H1 (cell line): ENCODE measurements at regions of chr9 and their contacts with region 1.

Region 1: DNA sequence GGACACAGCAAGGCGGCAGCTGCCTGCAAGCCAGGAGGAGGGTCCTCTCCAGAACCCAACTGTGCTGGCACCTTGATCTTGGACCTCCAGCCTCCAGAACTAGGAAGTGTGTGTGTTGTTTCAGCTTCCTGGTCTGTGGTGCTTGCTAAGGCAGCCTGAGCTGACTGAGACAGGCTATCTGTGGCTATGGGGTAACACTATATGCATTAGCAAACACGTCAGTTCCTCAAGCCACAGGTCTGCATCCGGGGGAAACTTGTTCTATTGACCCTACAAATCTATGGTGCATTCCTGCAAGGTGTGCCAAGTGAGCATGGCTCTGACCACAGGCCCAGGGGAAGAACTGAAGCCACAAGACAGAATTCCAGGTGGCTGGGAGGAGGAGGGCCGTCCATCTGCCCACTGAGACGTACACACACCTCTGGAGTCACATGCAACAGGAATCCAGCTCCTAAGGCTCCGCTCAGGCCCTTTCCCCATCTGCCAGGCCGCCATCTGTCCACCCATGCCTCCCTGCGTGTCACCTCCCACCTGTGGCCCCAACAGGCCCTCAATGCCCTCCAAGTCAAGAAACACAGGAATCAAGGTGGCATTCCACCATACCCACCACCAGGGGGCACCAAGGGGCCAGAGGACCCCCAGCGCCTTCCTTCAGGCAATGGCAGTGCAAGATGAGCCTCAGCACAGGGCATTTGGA is 174.9 kb downstream of the ROR2 start:
- DNase-seq: peak; percentile 36 to 87
- H3K4me3 ChIP-seq: no peak overlapping the region
- H3K27ac ChIP-seq: no peak overlapping the region
- H3K4me1 ChIP-seq: peaks cover 0 to 2% (median 0%) of the 10 kb centered on the region in 4 experiments; a peak in 1 of 7 replicates
- H3K27me3 ChIP-seq: no peaks in the 10 kb centered on the region
- CTCF ChIP-seq: peak; percentile 90 to 97 (median 96)
- EP300 ChIP-seq: no peak
- POLR2A ChIP-seq: no peak
- RAD21 ChIP-seq: peak; percentile 96 to 99

Region 2: GRCh38 chr9:91785447-91785842 is 10.3 kb after region 1 on chr9:
- CTCF ChIA-PET with region 1: interaction called, 10 read pairs
- POLR2A ChIA-PET with region 1: no interaction called
- DNase-seq: no peak
- H3K4me3 ChIP-seq: no peak overlapping the region
- H3K27ac ChIP-seq: no peak overlapping the region
- H3K4me1 ChIP-seq: no peaks in the 10 kb centered on the region; a peak in 2 of 7 replicates
- H3K27me3 ChIP-seq: no peaks in the 10 kb centered on the region
- CTCF ChIP-seq: no peak
- EP300 ChIP-seq: no peak
- POLR2A ChIP-seq: no peak
- RAD21 ChIP-seq: no peak

Region 3: GRCh38 chr9:91795598-91796241 is 20.6 kb after region 1 on chr9:
- CTCF ChIA-PET with region 1: interaction called, 13 read pairs
- POLR2A ChIA-PET with region 1: no interaction called
- DNase-seq: no peak
- H3K4me3 ChIP-seq: no peak overlapping the region
- H3K27ac ChIP-seq: no peak overlapping the region
- H3K4me1 ChIP-seq: no peaks in the 10 kb centered on the region
- H3K27me3 ChIP-seq: no peaks in the 10 kb centered on the region
- CTCF ChIP-seq: no peak
- EP300 ChIP-seq: no peak
- POLR2A ChIP-seq: no peak
- RAD21 ChIP-seq: no peak

Region 4: GRCh38 chr9:91978739-91979414 is 203.7 kb after region 1 on chr9:
- CTCF ChIA-PET with region 1: interaction called, 31 read pairs
- POLR2A ChIA-PET with region 1: no interaction called
- DNase-seq: peak in 1 of 2 experiments; percentile 58
- H3K4me3 ChIP-seq: no peak overlapping the region
- H3K27ac ChIP-seq: no peak overlapping the region
- H3K4me1 ChIP-seq: no peaks in the 10 kb centered on the region
- H3K27me3 ChIP-seq: no peaks in the 10 kb centered on the region
- CTCF ChIP-seq: peak; percentile 56 to 86 (median 75)
- EP300 ChIP-seq: no peak
- POLR2A ChIP-seq: no peak
- RAD21 ChIP-seq: peak; percentile 80 to 86